ENCODE measurements at regions of chr3 and their contacts with region 1.

Region 1: GRCh38 chr3:15405448-15406050 is 21.8 kb downstream of the METTL6 start:
- DNase-seq: peak; percentile 59
- CTCF ChIP-seq: peak; percentile 55

Region 2: DNA sequence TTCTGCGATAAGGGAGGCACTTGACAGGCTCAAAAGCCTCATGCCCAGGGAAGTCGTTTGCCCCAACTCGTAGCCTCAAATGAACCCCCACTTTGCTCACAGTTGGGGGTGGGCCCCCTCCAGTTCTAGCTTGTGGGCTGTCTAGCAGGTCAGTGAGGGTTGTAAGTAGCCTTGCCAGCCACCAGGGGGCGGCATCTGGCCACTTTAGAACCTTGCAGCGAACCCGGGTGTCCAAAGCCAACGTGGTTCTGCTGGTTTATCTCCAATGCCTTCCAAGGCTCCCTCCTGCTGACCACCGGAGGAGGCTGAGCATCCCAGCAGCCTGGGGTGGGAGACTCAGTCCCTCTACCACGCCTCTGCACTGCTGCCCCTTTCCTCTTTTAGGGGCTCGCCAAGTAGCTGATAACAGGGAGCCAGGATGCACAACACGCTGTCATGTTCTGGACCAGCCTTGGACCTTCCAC is 297.4 kb before region 1 on chr3:
- in situ Hi-C with region 1: loop called (anchors 25 kb)
- DNase-seq: peak; percentile 88
- CTCF ChIP-seq: peak; percentile 88

Region 3: GRCh38 chr3:15693355-15693754 is 287.8 kb after region 1 on chr3:
- in situ Hi-C with region 1: no loop called
- DNase-seq: no peak
- CTCF ChIP-seq: no peak